Heart left ventricle (tissue), 16 donors: ENCODE measurements at regions of chr5 and their contacts with region 1.

Region 1: GRCh38 chr5:125756456-125756855 is 666.8 kb upstream of the GRAMD2B start:
- DNase-seq: no peak
- ATAC-seq: no peak
- H3K4me3 ChIP-seq: no peak overlapping the region
- H3K27ac ChIP-seq: no peak overlapping the region
- H3K4me1 ChIP-seq: no peaks in the 10 kb centered on the region
- H3K27me3 ChIP-seq: no peaks in the 10 kb centered on the region
- CTCF ChIP-seq: no peak
- POLR2A ChIP-seq: no peak

Region 2: GRCh38 chr5:125446996-125447395 is 309.5 kb before region 1 on chr5:
- intact Hi-C with region 1: loop called in 1 of 10 experiments (anchors 10 kb)
- DNase-seq: no peak
- ATAC-seq: no peak
- H3K4me3 ChIP-seq: no peak overlapping the region
- H3K27ac ChIP-seq: no peak overlapping the region
- H3K4me1 ChIP-seq: no peaks in the 10 kb centered on the region
- H3K27me3 ChIP-seq: no peaks in the 10 kb centered on the region
- CTCF ChIP-seq: no peak
- POLR2A ChIP-seq: no peak

Region 3: GRCh38 chr5:125595095-125595494 is 161.4 kb before region 1 on chr5:
- intact Hi-C with region 1: no loop called
- DNase-seq: peak; percentile 59 to 72 (median 67)
- ATAC-seq: peak; percentile 60 to 88 (median 86)
- H3K4me3 ChIP-seq: no peak overlapping the region
- H3K27ac ChIP-seq: peak overlapping the region in 1 of 12 donors; percentile 8
- H3K4me1 ChIP-seq: peaks cover 0 to 15% (median 7%) of the 10 kb centered on the region in 12 donors
- H3K27me3 ChIP-seq: no peaks in the 10 kb centered on the region
- CTCF ChIP-seq: no peak
- POLR2A ChIP-seq: no peak